Activated CD8-positive, alpha-beta T cell treated with anti-CD3 and anti-CD28 coated beads for 36 hours (primary cell): ENCODE measurements at regions of chr1 and their contacts with region 1.

Region 1: DNA sequence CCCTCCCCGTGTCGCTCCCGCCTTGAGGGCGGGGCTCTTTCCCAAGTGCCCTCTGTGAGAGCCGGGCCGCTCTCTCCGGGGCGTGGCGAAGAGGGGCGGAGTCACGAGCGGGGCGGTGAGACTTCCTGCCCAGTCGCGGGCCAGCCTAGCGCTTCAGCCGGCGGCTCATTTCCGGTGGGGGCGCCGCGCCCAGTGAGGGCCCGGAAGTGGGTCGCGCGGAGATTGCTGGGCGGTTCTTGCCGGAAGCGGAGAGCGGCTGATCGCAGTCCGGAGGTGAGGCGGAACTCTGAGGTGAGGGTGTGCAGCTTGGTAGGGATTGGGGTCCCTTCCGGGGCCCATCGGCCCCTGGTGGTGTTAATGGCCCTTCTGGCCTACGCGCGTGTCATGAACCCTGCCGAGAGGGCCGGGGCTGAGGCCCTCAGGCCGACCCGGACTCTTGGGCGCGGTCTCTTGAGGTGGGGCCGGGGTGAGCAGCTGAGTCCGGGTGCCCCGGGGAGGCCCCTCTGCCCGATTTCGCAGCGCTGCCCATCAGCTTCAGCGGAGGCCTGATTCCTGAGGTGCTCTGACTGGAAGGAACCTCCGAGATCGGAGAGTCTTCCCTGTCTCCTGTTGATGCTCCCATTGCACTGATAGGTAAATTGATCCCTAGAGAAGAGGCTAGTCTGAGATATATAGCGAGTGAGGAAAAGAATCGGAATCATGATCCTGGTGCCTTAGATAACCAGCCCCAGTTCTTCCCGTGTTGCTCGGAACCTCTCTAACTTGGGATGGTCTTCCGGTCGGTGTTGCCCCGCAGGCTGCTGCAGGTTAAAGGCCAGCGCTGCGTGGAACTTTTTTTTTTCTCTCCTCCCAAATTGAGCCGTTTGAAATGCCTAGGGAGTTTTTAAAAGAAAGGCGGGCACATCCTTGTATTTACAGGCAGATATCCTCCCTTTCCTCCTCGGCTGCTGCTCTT is at the start of gene CAP1:
- DNase-seq: peak; percentile 100
- ATAC-seq: peak; percentile 91
- H3K4me3 Mint-ChIP-seq: peak within 1 kb of the TSS; percentile 94
- H3K27ac Mint-ChIP-seq: peak within 1 kb of the TSS; percentile 97
- H3K4me1 Mint-ChIP-seq: peaks cover 53% of the 10 kb centered on the region
- H3K27me3 Mint-ChIP-seq: no peaks in the 10 kb centered on the region
- CTCF ChIP-seq: no peak
- total RNA-seq, gene CAP1: 511 to 512 TPM

Region 2: DNA sequence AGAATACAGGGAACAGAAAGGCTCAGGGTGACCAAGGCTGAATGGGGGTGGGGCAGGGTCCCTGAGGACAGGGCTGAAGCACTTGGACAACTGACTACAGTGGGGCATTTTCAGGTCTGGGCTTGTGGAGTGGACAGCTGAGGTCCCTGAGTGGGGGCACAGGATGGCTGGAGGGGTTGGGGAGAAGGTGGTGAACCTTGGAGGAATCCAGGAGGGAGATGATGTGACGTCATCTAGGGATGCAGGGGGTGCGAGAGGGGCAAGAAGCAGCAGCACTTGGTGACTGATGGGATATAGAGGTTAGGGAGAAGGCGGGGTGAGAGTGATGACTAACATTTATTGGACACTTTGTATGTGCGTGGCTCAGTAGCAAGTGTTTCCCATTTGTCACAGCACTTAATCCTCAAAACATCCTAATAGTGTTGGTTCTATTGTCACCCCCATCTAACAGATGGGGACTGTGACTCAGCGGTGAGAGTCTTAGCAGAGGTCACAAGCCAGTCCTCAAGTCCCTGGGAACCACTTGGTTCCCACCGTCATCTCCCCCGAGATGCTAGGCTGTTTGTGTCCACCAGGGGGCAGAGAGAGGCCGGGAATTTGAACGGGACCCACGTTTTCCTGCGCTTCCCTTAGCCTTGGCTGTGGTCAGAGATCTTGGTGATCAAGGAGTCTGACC is 224.2 kb before region 1 on chr1:
- CTCF ChIA-PET with region 1: no interaction called
- POLR2A ChIA-PET with region 1: no interaction called
- intact Hi-C with region 1: loop called (anchors 10 kb)
- DNase-seq: peak; percentile 69
- ATAC-seq: peak; percentile 82
- H3K4me3 Mint-ChIP-seq: peak overlapping the region; percentile 39
- H3K27ac Mint-ChIP-seq: no peak overlapping the region
- H3K4me1 Mint-ChIP-seq: peaks cover 14% of the 10 kb centered on the region
- H3K27me3 Mint-ChIP-seq: peaks cover 16% of the 10 kb centered on the region
- CTCF ChIP-seq: peak; percentile 77

Region 3: GRCh38 chr1:39926343-39926793 is 114.4 kb before region 1 on chr1:
- CTCF ChIA-PET with region 1: no interaction called
- POLR2A ChIA-PET with region 1: no interaction called
- intact Hi-C with region 1: loop called (anchors 10 kb)
- DNase-seq: no peak
- ATAC-seq: no peak
- H3K4me3 Mint-ChIP-seq: no peak overlapping the region
- H3K27ac Mint-ChIP-seq: no peak overlapping the region
- H3K4me1 Mint-ChIP-seq: no peaks in the 10 kb centered on the region
- H3K27me3 Mint-ChIP-seq: no peaks in the 10 kb centered on the region
- CTCF ChIP-seq: no peak

Region 4: GRCh38 chr1:40059338-40059959 is 18.7 kb after region 1 on chr1:
- CTCF ChIA-PET with region 1: interaction called, 6 read pairs
- POLR2A ChIA-PET with region 1: interaction called, 11 read pairs
- intact Hi-C with region 1: no loop called
- DNase-seq: peak; percentile 57
- ATAC-seq: peak; percentile 72
- H3K4me3 Mint-ChIP-seq: peak overlapping the region; percentile 53
- H3K27ac Mint-ChIP-seq: peak overlapping the region; percentile 91
- H3K4me1 Mint-ChIP-seq: peaks cover 89% of the 10 kb centered on the region
- H3K27me3 Mint-ChIP-seq: no peaks in the 10 kb centered on the region
- CTCF ChIP-seq: peak; percentile 38